Activated CD4-positive, alpha-beta memory T cell treated with anti-CD3 and anti-CD28 coated beads for 36 hours (primary cell): ENCODE measurements at regions of chr7 and their contacts with region 1.

Region 1: GRCh38 chr7:128409596-128410160 is at the start of gene IMPDH1:
- DNase-seq: peak; percentile 90
- H3K4me3 Mint-ChIP-seq: peak within 1 kb of the TSS; percentile 84
- H3K27ac Mint-ChIP-seq: peak within 1 kb of the TSS; percentile 60
- H3K4me1 Mint-ChIP-seq: peaks cover 28% of the 10 kb centered on the region
- H3K27me3 Mint-ChIP-seq: peaks cover 3% of the 10 kb centered on the region
- total RNA-seq, gene IMPDH1: 52.9 to 57.7 TPM

Region 2: DNA sequence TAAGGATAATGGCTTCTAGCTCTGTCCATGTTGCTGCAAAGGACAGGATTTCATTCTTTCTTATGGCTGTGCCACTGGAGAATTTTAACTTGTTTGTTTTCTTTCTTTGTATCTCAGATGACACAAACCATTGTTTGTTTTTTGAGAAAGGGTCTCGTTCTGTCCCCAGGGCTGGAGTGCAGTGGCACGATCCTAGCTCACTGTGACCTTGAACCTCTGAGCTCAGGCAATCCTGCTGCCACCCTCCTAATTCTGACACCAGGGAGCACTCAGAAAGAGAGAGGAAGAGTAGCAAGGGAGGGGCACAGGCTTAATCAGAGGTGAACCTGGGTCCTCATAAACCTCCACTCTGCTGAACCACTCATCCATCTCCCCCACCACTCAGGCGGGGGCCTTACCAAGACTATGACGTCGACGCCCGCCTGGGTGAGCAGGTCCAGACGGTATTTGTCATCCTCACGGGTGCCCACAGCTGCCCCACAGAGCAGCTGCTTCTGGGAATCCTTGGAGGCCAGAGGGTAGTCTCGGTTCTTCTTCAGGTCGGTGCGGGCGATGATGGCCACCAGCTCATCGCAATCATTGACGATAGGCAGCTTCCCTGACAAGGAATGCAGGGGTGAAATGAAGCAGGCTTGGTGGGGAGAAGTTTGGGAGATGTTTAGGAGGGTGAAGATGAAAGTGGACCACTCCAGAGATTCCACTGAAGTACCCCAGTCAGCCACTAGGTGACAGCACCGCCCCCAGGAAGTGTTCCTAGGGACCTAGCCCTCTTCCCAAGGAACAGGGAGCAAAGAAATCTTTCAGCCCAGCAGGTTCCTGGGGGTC is 11.4 kb before region 1 on chr7:
- CTCF ChIA-PET with region 1: interaction called, 10 read pairs
- POLR2A ChIA-PET with region 1: no interaction called
- intact Hi-C with region 1: no loop called
- DNase-seq: peak; percentile 59
- H3K4me3 Mint-ChIP-seq: no peak overlapping the region
- H3K27ac Mint-ChIP-seq: no peak overlapping the region
- H3K4me1 Mint-ChIP-seq: peaks cover 5% of the 10 kb centered on the region
- H3K27me3 Mint-ChIP-seq: no peaks in the 10 kb centered on the region